ENCODE measurements at regions of chr4 and their contacts with region 1.

Region 1: DNA sequence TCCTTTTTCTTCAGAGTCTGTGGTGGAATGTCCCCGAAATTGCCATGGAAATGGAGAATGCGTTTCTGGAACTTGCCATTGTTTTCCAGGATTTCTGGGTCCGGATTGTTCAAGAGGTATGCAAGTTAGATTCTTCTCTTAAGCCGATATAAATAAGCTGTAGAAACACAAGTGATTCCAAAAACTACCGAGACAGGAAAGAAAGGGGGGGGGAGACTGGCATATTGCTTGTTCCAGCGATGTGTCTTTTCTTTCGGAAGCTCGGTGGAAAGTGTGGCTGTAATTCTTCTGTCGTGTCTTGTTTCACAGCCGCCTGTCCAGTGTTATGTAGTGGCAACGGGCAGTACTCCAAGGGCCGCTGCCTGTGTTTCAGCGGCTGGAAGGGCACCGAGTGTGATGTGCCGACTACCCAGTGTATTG is 236.9 kb downstream of the DCTD start:
- DNase-seq: peak in 1 of 2 donors; percentile 34
- ATAC-seq: peak; percentile 56 to 81
- H3K4me3 ChIP-seq: peak overlapping the region in 3 of 4 donors; percentile 24 to 42 (median 33)
- H3K27ac ChIP-seq: no peak overlapping the region
- H3K4me1 ChIP-seq: no peaks in the 10 kb centered on the region
- H3K27me3 ChIP-seq: no peaks in the 10 kb centered on the region
- CTCF ChIP-seq: no peak
- POLR2A ChIP-seq: no peak

Region 2: DNA sequence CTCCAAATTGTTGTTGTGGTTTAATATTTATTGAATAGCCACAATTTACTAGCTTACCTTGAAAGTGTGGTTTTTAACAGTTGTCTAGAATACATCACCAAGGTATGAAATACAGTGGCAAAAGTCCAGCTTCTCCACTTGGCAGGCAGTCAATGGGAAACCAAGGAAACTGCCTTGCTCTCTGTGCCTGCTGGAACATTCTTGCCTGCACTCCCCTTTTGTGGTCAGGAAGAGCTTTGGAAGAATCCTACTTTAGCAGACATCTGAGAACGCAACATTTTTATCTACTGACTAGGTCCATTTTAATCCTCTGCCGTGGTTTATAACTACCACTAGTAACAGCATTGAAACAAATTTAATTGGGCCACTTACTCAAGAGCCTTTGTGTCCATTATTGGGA is 372.5 kb before region 1 on chr4:
- in situ Hi-C with region 1: no loop called
- intact Hi-C with region 1: no loop called
- DNase-seq: no peak
- ATAC-seq: no peak
- H3K4me3 ChIP-seq: no peak overlapping the region
- H3K27ac ChIP-seq: no peak overlapping the region
- H3K4me1 ChIP-seq: no peaks in the 10 kb centered on the region
- H3K27me3 ChIP-seq: no peaks in the 10 kb centered on the region
- CTCF ChIP-seq: no peak
- POLR2A ChIP-seq: no peak

Region 3: GRCh38 chr4:182694551-182694950 is 14.3 kb after region 1 on chr4:
- in situ Hi-C with region 1: no loop called
- intact Hi-C with region 1: loop called (anchors 1 kb)
- DNase-seq: no peak
- ATAC-seq: no peak
- H3K4me3 ChIP-seq: no peak overlapping the region
- H3K27ac ChIP-seq: no peak overlapping the region
- H3K4me1 ChIP-seq: no peaks in the 10 kb centered on the region
- H3K27me3 ChIP-seq: no peaks in the 10 kb centered on the region
- CTCF ChIP-seq: no peak
- POLR2A ChIP-seq: no peak